Posterior cingulate gyrus (tissue), 11 donors: ENCODE measurements at regions of chr19 and their contacts with region 1.

Region 1: GRCh38 chr19:58059003-58059670 is at the start of gene ZNF135:
- DNase-seq: peak; percentile 76 to 98 (median 83)

Region 2: DNA sequence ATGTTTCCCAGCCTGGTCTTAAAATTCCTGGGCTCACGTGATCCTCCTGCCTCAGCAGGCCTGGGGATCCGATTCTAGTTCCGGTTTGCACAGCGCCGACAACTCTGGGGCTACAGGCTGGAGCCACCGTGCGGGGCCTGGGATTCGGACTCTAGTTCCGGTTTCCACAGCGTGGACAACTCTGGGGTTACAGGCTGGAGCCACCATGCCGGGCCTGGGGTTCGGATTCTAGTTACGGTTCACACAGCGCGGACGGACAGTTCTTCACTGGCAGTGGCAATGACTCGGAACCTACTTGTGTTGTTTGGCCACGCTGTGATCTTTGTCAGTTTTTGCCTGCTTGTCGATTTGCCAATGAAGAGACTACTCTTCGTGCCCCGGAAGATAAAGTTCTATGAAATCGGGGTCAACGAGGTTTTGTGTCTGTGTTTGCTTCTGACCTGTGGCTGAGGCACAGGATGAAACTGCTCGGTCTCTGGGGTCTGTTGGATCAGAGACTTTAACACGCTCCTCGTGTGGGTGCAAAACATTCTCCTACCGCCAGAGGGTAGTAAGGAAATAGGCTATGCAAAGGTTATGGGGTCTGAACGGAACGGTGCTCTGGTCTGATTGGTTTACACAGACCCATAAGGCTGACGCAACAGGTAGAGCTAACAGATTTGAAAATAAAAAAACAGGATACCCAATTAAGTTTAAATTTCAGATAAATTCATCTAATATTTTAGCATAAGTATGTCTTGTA is 37.4 kb before region 1 on chr19:
- intact Hi-C with region 1: loop called (anchors 5 kb)
- DNase-seq: peak in 6 of 10 donors; percentile 27 to 80 (median 60)

Region 3: DNA sequence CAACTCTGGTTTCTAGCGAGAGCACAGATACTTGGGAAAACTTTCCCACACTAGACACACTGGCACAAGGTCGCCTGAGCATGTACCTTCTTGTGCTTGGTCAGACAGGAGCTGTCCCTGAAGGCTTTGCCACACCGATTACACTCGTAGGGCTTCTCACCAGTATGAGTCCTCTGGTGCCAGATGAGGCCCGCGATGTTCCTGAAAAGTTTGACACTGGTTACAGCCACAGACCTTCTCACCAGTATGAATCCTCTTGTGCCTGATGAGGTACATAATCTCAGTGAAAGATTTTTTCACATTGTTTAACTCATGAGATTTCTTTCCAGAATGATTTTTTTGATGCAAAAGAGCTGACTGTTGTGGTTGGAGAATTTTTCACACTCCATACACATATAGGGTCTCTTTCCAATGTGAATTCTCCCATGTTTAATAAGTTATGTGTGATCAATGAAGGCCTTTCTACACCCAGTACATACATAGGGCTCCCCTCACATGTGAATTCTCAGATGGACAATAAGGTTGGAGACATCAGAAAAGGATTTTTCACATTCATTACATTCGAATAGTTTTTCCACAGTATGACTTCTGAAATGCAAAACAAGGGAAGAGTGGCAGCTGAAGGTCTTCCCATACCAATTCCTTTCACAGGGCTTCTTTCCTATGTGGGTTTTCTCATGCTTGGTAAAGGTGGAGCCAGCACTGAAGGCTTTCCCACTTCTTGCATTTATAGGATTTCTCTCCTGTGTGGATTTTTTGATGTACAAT is 48.8 kb after region 1 on chr19:
- intact Hi-C with region 1: no loop called
- DNase-seq: no peak